T-cell (primary cell): ENCODE measurements at regions of chr6 and their contacts with region 1.

Region 1: GRCh38 chr6:144194293-144194828 is 44.0 kb downstream of the STX11 start:
- DNase-seq: no peak
- ATAC-seq: no peak
- H3K4me3 ChIP-seq: no peak overlapping the region
- H3K4me3 Mint-ChIP-seq: no peak overlapping the region
- H3K27ac ChIP-seq: no peak overlapping the region
- H3K27ac Mint-ChIP-seq: no peak overlapping the region
- H3K4me1 ChIP-seq: peaks cover 0 to 8% of the 10 kb centered on the region in 2 experiments
- H3K4me1 Mint-ChIP-seq: peaks cover 13 to 15% (median 14%) of the 10 kb centered on the region in 3 donors
- H3K27me3 ChIP-seq: no peaks in the 10 kb centered on the region
- H3K27me3 Mint-ChIP-seq: no peaks in the 10 kb centered on the region

Region 2: GRCh38 chr6:144123836-144124235 is 70.5 kb before region 1 on chr6:
- CTCF ChIA-PET with region 1: no interaction called
- POLR2A ChIA-PET with region 1: interaction called in 1 of 2 experiments, 19 read pairs
- DNase-seq: no peak
- ATAC-seq: no peak
- H3K4me3 ChIP-seq: no peak overlapping the region
- H3K4me3 Mint-ChIP-seq: no peak overlapping the region
- H3K27ac ChIP-seq: no peak overlapping the region
- H3K27ac Mint-ChIP-seq: no peak overlapping the region
- H3K4me1 ChIP-seq: no peaks in the 10 kb centered on the region
- H3K4me1 Mint-ChIP-seq: no peaks in the 10 kb centered on the region
- H3K27me3 ChIP-seq: peaks cover 0 to 3% of the 10 kb centered on the region in 2 experiments
- H3K27me3 Mint-ChIP-seq: peaks cover 1 to 3% of the 10 kb centered on the region in 2 donors

Region 3: DNA sequence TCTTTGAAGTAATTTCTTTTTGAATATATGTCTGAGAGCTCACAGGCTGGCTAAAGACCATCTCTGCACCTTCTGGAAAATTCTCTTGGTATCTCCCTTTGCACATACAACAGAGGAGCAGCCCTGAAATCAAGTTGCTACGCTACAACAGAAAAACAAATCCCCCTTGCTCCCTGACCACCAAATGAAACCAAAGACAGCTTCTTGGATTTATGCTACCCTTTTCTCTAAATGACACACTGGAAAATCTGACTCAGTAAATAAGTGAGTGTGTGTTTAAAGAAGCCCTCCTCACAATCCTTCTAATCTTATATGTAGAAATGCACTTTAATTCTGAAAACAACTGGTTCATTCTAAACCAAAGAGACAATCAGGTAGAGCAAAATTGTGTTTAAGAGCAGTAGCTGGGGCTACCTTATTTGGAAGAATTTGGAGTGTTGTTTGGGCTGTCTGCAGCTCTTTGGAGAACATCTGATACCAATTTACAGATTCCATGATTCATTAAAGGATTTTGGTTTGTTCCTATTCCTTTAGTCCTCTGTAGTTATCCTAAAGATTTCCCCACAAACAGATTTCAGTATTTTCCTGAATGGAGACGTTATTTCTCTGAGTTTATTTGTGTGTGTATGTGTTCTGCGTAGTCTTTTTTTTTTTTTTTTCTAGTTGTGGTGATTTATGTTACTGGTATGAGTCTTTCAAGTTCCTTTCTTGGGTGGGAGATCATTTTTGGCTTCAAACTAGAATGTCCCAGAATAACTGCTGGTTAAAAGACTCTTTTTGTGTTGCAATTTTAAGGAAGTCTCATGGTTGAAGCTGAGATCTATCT is 54.3 kb after region 1 on chr6:
- CTCF ChIA-PET with region 1: no interaction called
- POLR2A ChIA-PET with region 1: no interaction called
- DNase-seq: no peak
- ATAC-seq: no peak
- H3K4me3 ChIP-seq: no peak overlapping the region
- H3K4me3 Mint-ChIP-seq: no peak overlapping the region
- H3K27ac ChIP-seq: no peak overlapping the region
- H3K27ac Mint-ChIP-seq: no peak overlapping the region
- H3K4me1 ChIP-seq: peaks cover 0 to 2% of the 10 kb centered on the region in 2 experiments
- H3K4me1 Mint-ChIP-seq: peaks cover 5 to 6% (median 6%) of the 10 kb centered on the region in 3 donors
- H3K27me3 ChIP-seq: peaks cover 0 to 13% of the 10 kb centered on the region in 2 experiments
- H3K27me3 Mint-ChIP-seq: peaks cover 13 to 18% of the 10 kb centered on the region in 2 donors